ENCODE measurements at regions of chr14 and their contacts with region 1.

Region 1: DNA sequence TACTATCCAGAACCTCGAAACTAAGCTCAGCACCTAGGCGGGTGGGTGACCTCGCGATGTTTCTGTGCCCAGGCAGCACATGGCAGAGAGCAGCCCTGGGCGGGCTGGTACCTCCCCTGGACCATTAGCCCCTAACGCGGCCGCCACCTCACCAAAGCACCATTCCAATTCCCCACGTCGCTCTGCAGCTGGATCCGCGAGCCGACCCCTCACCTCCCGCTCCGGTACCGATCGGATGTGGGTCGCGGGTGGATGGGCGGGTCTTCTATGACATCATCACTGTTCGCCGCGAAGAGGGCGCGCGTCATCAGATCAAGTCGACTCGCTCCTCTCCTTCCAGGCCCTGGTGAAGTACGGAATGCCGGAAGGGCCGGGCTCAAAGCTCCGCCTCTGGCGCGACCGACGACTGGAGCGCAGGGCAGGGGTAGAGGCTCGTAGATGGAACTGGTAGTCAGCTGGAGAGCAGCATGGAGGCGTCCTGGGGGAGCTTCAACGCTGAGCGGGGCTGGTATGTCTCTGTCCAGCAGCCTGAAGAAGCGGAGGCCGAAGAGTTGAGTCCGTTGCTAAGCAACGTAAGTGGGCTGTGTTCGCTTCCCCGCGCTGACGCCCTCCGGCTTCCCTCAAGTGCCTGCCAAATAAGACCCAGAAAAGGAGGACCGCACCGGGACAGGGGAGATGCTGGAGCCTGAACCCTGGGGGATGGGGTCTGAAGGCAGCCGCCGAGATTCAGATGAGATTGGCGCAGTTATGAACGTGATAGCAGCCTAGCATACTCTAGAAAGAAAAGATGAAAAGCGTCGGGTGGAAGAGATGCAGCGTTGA is at the starts of genes SLC38A6 and TRMT5:
- DNase-seq: peak; percentile 95
- ATAC-seq: peak; percentile 98
- total RNA-seq, gene SLC38A6: 4.3 TPM
- total RNA-seq, gene TRMT5: 5.2 TPM

Region 2: DNA sequence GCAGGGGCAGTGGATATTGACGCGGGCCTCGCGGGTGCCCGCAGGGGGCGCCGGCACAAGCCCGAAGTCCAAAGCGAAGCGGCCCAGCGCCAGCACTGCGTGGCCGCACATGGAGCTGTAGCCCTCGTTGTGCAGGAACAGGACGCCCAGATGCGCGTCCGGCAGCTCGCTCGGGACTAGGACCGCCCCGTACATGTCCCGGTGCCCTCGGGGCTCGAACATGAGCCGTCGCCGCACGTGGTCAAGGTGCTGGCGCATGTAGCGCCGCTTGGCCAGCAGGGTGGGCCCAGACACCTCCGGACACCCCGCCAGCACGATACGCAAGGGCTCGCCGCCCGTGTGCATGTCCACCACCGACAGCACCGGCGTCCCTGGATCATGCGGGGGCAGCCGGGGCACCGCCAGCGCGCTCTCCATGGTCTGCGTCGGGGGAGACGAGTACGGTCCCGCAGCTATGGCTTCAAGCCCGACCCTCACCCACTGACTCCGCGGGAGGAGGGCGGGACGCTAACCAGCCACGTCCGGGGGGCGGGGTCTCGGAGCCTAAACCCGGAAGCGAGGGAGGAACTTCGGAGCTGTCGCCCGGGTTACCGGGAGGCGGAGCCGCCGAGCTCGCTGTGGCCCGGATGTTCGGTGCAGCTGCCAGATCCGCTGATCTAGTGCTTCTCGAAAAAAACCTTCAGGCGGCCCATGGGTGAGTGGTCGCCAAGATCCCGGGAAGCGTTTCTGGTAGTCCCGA is 1497.0 kb before region 1 on chr14 and contains the starts of genes JKAMP and L3HYPDH:
- intact Hi-C with region 1: loop called (anchors 5 kb)
- DNase-seq: peak; percentile 100
- ATAC-seq: peak; percentile 98
- total RNA-seq, gene JKAMP: 23.7 TPM
- total RNA-seq, gene L3HYPDH: 8.8 TPM

Region 3: DNA sequence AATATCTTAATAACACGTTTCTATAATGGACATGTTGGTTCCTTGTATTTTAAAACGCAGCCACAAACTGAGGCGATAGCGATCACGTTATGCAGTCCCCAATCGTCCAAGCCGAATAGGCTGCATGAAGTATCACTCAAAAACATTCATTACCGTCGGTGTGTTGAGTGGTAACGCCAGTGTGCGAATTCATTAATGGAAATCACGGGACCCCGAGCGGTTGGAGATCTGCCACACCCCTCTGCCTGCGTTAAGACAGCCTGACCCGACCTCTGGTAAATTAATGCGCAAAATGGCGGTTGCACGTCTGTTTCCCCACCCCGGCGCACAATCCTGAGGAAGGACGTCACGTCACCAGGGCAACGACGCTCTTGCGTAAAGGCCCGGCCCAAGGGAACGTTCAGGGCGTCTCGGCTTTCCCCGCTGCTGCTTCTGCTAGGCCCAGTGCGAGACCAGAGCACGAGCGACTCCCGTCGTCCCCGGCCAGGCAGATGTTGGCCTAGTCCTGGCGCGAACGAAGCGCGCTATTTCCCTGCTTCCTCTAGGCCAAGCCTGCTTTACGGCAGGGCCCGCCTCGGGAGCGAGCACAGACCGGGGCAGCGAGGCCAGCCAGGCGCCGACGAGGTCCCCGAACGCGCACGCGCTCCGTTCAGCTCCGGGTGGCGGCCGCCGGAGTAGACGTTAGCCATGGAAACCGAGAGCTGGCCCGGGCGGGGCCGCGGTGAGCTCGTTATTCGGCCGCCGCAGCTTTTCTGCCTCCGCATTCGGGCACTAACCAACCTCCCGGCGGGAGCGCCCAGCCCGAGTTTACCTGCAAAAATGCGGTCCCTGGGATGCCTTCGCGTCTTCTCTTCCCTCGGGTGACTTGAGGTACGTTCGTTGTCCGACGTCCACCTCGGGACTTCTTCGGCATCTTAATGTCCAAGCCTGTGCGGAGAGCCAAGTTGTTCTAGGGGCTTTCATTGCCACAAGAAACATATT is 889.2 kb before region 1 on chr14 and contains the start of gene PCNX4:
- intact Hi-C with region 1: loop called (anchors 5 kb)
- DNase-seq: peak; percentile 97
- ATAC-seq: peak; percentile 98
- total RNA-seq, gene PCNX4: 23.5 TPM

Region 4: GRCh38 chr14:60724137-60724619 is 256.8 kb before region 1 on chr14 and contains the start of gene SIX4:
- intact Hi-C with region 1: loop called (anchors 5 kb)
- DNase-seq: peak; percentile 75
- ATAC-seq: peak; percentile 90
- total RNA-seq, gene SIX4: 1.4 TPM

Region 5: DNA sequence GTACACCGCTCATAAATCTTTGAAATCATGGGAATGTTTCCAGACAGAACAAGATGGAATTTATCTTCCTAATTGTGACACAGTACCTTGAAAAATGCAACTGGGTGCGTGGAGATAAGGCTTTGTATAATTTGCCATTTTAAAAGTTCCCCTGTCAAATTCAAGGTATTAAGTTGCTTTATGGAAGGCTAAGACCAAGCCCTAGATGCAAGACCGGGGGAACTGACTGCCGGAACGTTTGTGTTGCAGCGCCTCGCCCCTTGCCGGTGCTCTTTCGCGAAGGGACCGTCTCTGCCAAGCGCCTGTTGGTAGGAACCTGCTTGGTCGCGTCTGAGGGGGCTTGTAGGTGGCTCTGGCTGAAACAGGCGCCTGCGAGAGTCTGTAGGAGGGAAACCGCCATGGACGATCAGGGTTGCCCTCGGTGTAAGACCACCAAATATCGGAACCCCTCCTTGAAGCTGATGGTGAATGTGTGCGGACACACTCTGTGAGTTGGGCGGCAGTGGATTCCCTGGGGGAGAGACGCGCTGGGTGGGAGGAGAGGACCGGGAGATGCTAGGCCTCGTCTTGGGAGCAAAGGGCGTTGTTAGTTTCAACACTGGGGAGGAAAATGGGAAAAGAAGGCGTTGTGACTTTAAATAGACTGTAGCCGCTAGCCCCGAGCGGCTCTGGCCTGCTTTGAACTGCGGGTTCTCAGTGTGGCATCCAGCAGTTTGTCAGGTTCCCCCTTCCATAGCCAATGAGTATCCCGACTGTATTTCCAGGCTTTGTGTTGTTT is 246.4 kb before region 1 on chr14 and contains the start of gene MNAT1:
- intact Hi-C with region 1: loop called (anchors 2 kb)
- DNase-seq: peak; percentile 81
- ATAC-seq: peak; percentile 92
- total RNA-seq, gene MNAT1: 25.7 TPM

Region 6: DNA sequence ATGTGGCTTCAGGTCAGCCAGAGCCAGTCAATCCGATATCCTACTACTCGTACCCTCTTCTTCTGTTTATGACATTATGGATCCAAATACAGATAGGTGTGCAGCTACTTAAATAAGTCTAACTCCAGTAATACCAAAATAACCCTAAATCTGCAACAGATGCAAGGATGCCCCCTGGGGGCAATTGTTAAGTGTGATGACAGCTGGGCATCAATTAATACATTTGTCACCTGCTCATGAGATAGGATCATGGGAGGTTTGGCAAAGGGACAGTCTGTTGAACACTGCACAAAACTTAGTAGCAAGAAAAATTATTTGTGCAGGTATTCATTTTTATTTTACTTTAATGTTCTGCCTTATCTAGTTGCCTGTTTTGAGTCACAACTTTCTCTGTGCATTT is 83.2 kb after region 1 on chr14:
- intact Hi-C with region 1: no loop called
- DNase-seq: no peak
- ATAC-seq: no peak